B cell (primary cell): ENCODE measurements at regions of chr4 and their contacts with region 1.

Region 1: DNA sequence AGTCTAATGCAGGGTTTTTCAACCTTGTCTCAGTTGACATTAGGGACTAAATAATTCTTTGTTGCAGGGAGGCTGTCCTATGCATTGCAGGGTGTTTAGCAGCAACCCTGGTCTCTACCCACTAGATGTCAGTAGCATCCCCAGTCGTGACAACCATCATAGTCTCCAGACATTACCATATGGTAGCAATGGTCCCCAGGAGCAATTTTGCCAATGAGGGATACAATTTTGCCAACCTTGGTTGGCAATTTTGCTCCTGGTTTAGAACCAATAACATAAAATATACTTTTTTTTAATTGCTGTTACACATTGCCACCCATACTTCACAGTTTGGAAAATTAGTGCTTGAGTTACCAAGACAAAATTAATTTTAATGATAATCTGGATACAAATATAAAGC is 6.0 kb downstream of the EREG start:
- DNase-seq: peak; percentile 52
- ATAC-seq: peak; percentile 64
- H3K4me3 ChIP-seq: no peak overlapping the region
- H3K4me3 Mint-ChIP-seq: no peak overlapping the region
- H3K27ac ChIP-seq: no peak overlapping the region
- H3K27ac Mint-ChIP-seq: no peak overlapping the region
- H3K4me1 ChIP-seq: peaks cover 0 to under 1% of the 10 kb centered on the region in 2 donors
- H3K4me1 Mint-ChIP-seq: no peaks in the 10 kb centered on the region
- H3K27me3 ChIP-seq: peaks cover 0 to 7% (median 3%) of the 10 kb centered on the region in 4 experiments
- H3K27me3 Mint-ChIP-seq: peaks cover 22% of the 10 kb centered on the region
- CTCF ChIP-seq: peak; percentile 75

Region 2: GRCh38 chr4:74293558-74293957 is 77.4 kb before region 1 on chr4:
- CTCF ChIA-PET with region 1: no interaction called
- POLR2A ChIA-PET with region 1: no interaction called
- intact Hi-C with region 1: no loop called
- DNase-seq: no peak
- ATAC-seq: no peak
- H3K4me3 ChIP-seq: no peak overlapping the region
- H3K4me3 Mint-ChIP-seq: no peak overlapping the region
- H3K27ac ChIP-seq: no peak overlapping the region
- H3K27ac Mint-ChIP-seq: no peak overlapping the region
- H3K4me1 ChIP-seq: no peaks in the 10 kb centered on the region
- H3K4me1 Mint-ChIP-seq: no peaks in the 10 kb centered on the region
- H3K27me3 ChIP-seq: no peaks in the 10 kb centered on the region
- H3K27me3 Mint-ChIP-seq: no peaks in the 10 kb centered on the region
- CTCF ChIP-seq: no peak

Region 3: GRCh38 chr4:74423104-74423503 is 52.2 kb after region 1 on chr4:
- CTCF ChIA-PET with region 1: no interaction called
- POLR2A ChIA-PET with region 1: no interaction called
- intact Hi-C with region 1: no loop called
- DNase-seq: no peak
- ATAC-seq: no peak
- H3K4me3 ChIP-seq: no peak overlapping the region
- H3K4me3 Mint-ChIP-seq: no peak overlapping the region
- H3K27ac ChIP-seq: no peak overlapping the region
- H3K27ac Mint-ChIP-seq: no peak overlapping the region
- H3K4me1 ChIP-seq: no peaks in the 10 kb centered on the region
- H3K4me1 Mint-ChIP-seq: no peaks in the 10 kb centered on the region
- H3K27me3 ChIP-seq: no peaks in the 10 kb centered on the region
- H3K27me3 Mint-ChIP-seq: peaks cover 20% of the 10 kb centered on the region
- CTCF ChIP-seq: no peak

Region 4: DNA sequence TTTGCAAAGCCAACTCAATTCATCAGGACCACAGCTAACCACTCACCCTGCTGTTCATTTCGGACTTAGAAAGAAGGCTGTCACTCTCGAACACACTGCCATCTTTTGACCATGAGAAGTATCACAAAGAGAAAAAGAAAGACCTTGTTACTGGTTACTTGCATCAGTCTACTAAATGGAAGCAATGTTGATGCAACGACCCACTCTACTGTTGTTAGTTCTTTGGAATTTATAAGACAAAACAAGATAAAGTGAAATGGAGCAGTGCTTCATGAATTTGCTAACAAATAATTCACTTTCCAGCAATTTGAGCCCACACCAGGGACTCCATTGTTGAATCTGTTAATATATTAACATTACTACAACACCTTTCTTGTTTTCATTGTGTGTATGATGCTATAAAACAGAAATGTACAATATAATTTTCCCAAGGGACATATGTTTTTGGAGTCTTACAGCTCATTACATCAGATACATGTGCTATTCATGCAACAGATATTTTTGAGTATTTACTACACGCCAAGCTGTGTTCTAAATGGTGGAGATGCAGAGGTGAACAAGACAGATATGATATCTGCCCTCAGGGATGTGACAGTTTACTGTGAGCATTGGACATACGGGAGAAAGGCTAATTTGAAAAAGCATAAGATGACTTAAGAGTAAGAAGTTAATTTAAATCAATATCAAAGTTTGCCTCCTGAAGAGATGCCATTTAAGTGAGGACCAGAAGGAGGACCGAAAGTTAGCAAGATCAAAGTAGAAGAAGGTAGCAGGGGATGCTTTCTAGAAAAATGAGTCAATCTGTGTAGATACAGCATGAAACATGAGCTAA is 161.3 kb after region 1 on chr4:
- CTCF ChIA-PET with region 1: interaction called, 152 read pairs
- POLR2A ChIA-PET with region 1: no interaction called
- intact Hi-C with region 1: no loop called
- DNase-seq: peak; percentile 66
- ATAC-seq: peak; percentile 53
- H3K4me3 ChIP-seq: no peak overlapping the region
- H3K4me3 Mint-ChIP-seq: no peak overlapping the region
- H3K27ac ChIP-seq: no peak overlapping the region
- H3K27ac Mint-ChIP-seq: no peak overlapping the region
- H3K4me1 ChIP-seq: no peaks in the 10 kb centered on the region
- H3K4me1 Mint-ChIP-seq: no peaks in the 10 kb centered on the region
- H3K27me3 ChIP-seq: peaks cover 0 to 4% (median 0%) of the 10 kb centered on the region in 4 experiments
- H3K27me3 Mint-ChIP-seq: peaks cover 13% of the 10 kb centered on the region
- CTCF ChIP-seq: peak; percentile 62

Region 5: DNA sequence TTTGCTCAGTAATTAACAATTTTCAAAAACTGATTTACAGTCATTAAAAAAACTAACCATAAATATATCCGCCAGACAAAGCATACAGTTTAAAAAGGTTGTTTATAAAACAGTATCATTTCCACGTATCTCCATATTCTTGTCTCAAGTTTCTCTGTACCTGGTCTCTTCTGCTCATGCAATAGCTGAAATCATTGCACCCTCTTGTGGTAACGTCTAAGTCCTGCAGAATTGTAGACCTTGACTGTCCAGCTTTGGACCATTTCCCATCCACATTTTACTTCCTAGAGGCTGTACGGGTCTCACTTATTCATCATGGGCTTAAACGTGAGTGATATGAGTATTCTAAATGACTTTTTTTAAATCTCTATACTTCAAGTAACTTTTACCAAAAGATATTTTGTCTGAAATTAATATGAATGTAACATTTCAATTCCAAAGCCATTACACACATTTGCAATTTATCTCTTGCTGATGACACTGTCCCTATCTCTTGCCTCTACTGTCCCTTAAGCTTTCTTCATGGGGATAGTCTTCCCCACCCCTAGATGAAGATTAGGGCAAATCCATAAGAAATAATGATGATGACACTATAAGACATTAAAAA is 304.9 kb after region 1 on chr4:
- CTCF ChIA-PET with region 1: interaction called, 67 read pairs
- POLR2A ChIA-PET with region 1: no interaction called
- intact Hi-C with region 1: loop called (anchors 1 kb)
- DNase-seq: peak; percentile 44
- ATAC-seq: peak; percentile 56
- H3K4me3 ChIP-seq: no peak overlapping the region
- H3K4me3 Mint-ChIP-seq: no peak overlapping the region
- H3K27ac ChIP-seq: no peak overlapping the region
- H3K27ac Mint-ChIP-seq: no peak overlapping the region
- H3K4me1 ChIP-seq: no peaks in the 10 kb centered on the region
- H3K4me1 Mint-ChIP-seq: peaks cover 3% of the 10 kb centered on the region
- H3K27me3 ChIP-seq: no peaks in the 10 kb centered on the region
- H3K27me3 Mint-ChIP-seq: peaks cover 31% of the 10 kb centered on the region
- CTCF ChIP-seq: peak; percentile 79